Activated CD8-positive, alpha-beta T cell treated with anti-CD3 and anti-CD28 coated beads for 36 hours (primary cell): ENCODE measurements at regions of chr1 and their contacts with region 1.

Region 1: GRCh38 chr1:110060034-110060661 is 10.3 kb downstream of the ALX3 start:
- DNase-seq: peak; percentile 84
- ATAC-seq: peak; percentile 96
- H3K4me3 Mint-ChIP-seq: no peak overlapping the region
- H3K27ac Mint-ChIP-seq: no peak overlapping the region
- H3K4me1 Mint-ChIP-seq: no peaks in the 10 kb centered on the region
- H3K27me3 Mint-ChIP-seq: no peaks in the 10 kb centered on the region
- CTCF ChIP-seq: peak; percentile 96

Region 2: GRCh38 chr1:109620841-109621286 is 439.3 kb before region 1 on chr1:
- CTCF ChIA-PET with region 1: no interaction called
- POLR2A ChIA-PET with region 1: no interaction called
- intact Hi-C with region 1: no loop called
- DNase-seq: peak; percentile 99
- ATAC-seq: peak; percentile 87
- H3K4me3 Mint-ChIP-seq: peak overlapping the region; percentile 88
- H3K27ac Mint-ChIP-seq: peak overlapping the region; percentile 93
- H3K4me1 Mint-ChIP-seq: peaks cover 58% of the 10 kb centered on the region
- H3K27me3 Mint-ChIP-seq: no peaks in the 10 kb centered on the region
- CTCF ChIP-seq: no peak

Region 3: DNA sequence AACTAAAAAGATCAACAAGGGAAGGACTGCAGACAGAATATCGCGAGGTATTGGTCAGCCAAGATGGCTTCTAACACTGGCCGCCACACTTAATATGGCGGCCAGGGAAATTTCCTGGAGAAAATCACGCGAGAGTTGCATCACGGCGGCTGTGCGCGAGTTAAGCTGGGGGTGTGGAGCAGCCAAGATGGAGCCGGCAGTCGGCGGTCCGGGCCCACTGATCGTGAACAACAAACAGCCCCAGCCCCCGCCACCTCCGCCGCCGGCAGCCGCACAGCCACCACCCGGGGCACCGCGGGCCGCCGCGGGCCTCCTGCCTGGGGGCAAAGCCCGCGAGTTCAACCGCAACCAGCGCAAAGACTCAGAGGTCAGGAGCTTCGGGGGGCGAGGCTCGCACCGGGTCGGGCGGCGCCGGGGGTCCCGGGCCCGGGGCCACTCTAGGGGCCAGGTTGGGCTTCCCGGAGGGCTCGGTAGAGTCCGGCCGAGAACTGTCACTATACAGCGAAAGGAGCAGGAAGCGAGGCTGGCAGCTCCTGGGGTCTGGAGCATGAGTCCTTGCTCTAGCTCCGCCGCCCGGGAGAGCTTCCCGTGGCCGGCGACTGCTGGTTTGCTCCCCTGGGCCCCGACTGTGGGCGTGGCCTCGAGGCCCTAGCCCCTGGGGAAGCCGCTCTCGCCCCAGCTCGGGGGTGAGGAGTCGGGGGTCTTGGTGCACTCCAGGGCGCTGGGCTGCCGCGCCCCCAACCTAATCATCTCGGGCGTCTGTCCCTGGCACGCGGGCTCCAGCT is 25.5 kb before region 1 on chr1 and contains the start of gene STRIP1:
- CTCF ChIA-PET with region 1: interaction called, 110 read pairs
- POLR2A ChIA-PET with region 1: no interaction called
- intact Hi-C with region 1: no loop called
- DNase-seq: peak; percentile 95
- ATAC-seq: peak; percentile 94
- H3K4me3 Mint-ChIP-seq: peak within 1 kb of the TSS; percentile 92
- H3K27ac Mint-ChIP-seq: peak within 1 kb of the TSS; percentile 91
- H3K4me1 Mint-ChIP-seq: peaks cover 44% of the 10 kb centered on the region
- H3K27me3 Mint-ChIP-seq: no peaks in the 10 kb centered on the region
- CTCF ChIP-seq: no peak
- total RNA-seq, gene STRIP1: 24.6 to 24.8 TPM

Region 4: GRCh38 chr1:110070282-110070669 is 10.1 kb after region 1 on chr1:
- CTCF ChIA-PET with region 1: interaction called, 163 read pairs
- POLR2A ChIA-PET with region 1: no interaction called
- intact Hi-C with region 1: no loop called
- DNase-seq: no peak
- ATAC-seq: no peak
- H3K4me3 Mint-ChIP-seq: no peak overlapping the region
- H3K27ac Mint-ChIP-seq: no peak overlapping the region
- H3K4me1 Mint-ChIP-seq: peaks cover 12% of the 10 kb centered on the region
- H3K27me3 Mint-ChIP-seq: peaks cover 57% of the 10 kb centered on the region
- CTCF ChIP-seq: no peak

Region 5: GRCh38 chr1:110087812-110088738 is 27.9 kb after region 1 on chr1:
- CTCF ChIA-PET with region 1: interaction called, 40 read pairs
- POLR2A ChIA-PET with region 1: interaction called, 3 read pairs
- intact Hi-C with region 1: no loop called
- DNase-seq: peak; percentile 69
- ATAC-seq: peak; percentile 79
- H3K4me3 Mint-ChIP-seq: no peak overlapping the region
- H3K27ac Mint-ChIP-seq: no peak overlapping the region
- H3K4me1 Mint-ChIP-seq: peaks cover 7% of the 10 kb centered on the region
- H3K27me3 Mint-ChIP-seq: peaks cover 47% of the 10 kb centered on the region
- CTCF ChIP-seq: peak; percentile 73

Region 6: GRCh38 chr1:110118636-110119615 is 58.8 kb after region 1 on chr1:
- CTCF ChIA-PET with region 1: interaction called, 251 read pairs
- POLR2A ChIA-PET with region 1: interaction called, 3 read pairs
- intact Hi-C with region 1: no loop called
- DNase-seq: peak; percentile 66
- ATAC-seq: peak; percentile 89
- H3K4me3 Mint-ChIP-seq: no peak overlapping the region
- H3K27ac Mint-ChIP-seq: no peak overlapping the region
- H3K4me1 Mint-ChIP-seq: peaks cover 12% of the 10 kb centered on the region
- H3K27me3 Mint-ChIP-seq: peaks cover 8% of the 10 kb centered on the region
- CTCF ChIP-seq: no peak